ENCODE measurements at regions of chr6 and their contacts with region 1.

Region 1: DNA sequence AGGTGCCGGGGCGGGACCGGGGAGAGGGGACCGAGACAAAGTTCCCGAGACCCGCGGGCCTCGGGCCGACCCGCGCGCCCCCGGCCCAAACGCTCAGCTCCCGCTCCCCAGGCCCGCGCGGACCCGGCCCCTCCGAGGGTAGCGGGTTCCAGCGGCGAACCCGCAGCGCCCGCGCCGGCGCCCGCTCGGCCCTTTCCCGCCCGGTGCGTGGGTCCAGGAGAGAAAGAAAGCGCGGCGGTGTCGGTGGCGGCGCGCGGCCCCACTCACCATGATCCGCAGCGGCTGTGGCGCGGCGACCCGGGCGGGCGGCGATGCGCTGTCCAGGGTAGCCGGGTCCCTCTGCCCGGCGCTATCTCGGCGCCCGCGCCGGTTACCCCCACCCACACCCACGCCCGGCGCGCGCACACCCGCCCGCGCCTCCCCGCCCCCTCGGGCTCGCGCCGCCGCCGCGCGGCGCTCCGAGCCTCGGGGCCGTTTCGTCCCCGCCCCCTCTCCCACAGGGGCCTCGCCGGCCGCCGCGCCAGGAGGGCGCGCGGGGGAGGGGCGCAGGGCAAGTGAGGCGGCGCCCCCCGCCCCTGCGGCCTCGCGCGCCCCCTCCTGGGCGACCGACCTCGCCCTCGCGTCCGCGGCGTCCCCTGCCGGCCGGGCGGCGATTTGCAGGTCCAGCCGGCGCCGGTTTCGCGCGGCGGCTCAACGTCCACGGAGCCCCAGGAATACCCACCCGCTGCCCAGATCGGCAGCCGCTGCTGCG is at the start of gene ELOVL2:
- DNase-seq: peak; percentile 16 to 49
- ATAC-seq: peak; percentile 72 to 92 (median 83)
- H3K4me3 ChIP-seq: peak within 1 kb of the TSS; percentile 28 to 64 (median 55)
- H3K27ac ChIP-seq: peak within 1 kb of the TSS in 4 of 10 donors; percentile 27 to 60 (median 46)
- H3K4me1 ChIP-seq: peaks cover 0 to 11% (median 0%) of the 10 kb centered on the region in 9 donors
- H3K27me3 ChIP-seq: peaks cover 0 to 96% (median 78%) of the 10 kb centered on the region in 7 donors
- CTCF ChIP-seq: peak; percentile 27 to 65 (median 42)
- total RNA-seq, gene ELOVL2: 0.73 to 3.5 (median 1.0) TPM

Region 2: DNA sequence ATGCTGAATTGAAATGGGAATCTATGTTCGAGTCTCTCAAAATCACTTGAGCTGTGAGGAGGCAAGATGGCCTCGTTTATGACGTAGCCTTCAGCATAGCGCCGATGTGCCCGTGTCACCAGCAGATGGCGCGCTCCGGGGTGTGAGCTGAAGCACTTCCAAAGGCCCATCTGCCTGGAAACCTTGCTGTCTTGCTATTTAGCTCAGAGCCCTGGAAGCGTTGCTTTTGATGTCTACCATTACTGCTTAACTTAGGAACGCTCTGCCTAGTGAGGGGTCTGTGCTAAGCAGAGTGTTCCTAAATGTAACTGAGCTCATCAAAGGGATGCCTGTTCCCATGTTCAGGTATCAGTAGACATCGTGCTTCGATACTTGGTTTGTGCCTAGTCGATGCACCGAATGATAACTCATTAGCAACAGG is 89.5 kb before region 1 on chr6:
- intact Hi-C with region 1: loop called in 1 of 10 experiments (anchors 5 kb)
- DNase-seq: peak; percentile 73 to 78
- ATAC-seq: peak in 7 of 8 donors; percentile 51 to 85 (median 67)
- H3K4me3 ChIP-seq: no peak overlapping the region
- H3K27ac ChIP-seq: no peak overlapping the region
- H3K4me1 ChIP-seq: no peaks in the 10 kb centered on the region
- H3K27me3 ChIP-seq: peaks cover 0 to 7% (median 0%) of the 10 kb centered on the region in 7 donors
- CTCF ChIP-seq: peak; percentile 41 to 84 (median 70)

Region 3: DNA sequence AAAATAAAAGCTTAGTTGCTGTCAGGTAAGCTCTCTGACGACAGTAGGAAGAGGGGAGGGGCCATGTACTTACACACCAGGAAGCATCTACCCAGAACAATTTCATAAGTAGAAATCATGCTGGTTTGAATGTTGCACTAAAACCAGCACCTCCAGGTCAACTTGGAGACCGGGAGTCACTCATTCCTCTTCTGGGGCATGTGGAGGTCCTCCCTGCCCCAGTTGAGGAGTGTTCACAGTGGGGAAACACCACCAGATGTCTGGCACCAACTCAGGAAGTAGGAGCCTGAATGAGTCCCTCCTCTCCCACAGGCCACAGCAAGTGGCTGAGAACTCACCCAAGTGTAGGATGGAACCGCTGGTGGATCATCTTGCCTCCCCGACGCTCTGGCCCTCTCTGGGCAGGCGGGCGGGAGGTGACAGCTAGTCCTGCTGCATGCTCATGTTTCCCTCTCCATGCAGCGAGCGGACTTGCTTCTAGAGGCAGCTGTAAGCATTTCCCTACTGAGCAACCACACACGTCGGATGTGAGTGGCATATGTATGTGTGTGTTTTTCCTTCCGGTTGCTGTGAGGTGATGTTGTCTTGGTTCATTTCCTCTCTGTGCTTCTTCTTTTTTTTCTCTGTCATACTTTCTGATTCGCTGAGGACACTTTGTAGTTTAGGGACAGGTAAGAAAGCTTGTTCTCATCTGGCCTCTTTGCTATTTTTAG is 337.8 kb after region 1 on chr6:
- intact Hi-C with region 1: no loop called
- DNase-seq: peak in 1 of 2 donors; percentile 20
- ATAC-seq: peak in 7 of 8 donors; percentile 49 to 76 (median 67)
- H3K4me3 ChIP-seq: peak overlapping the region in 3 of 10 donors; percentile 21 to 60 (median 30)
- H3K27ac ChIP-seq: peak overlapping the region in 4 of 10 donors; percentile 1 to 92 (median 40)
- H3K4me1 ChIP-seq: peaks cover 0 to 27% (median 0%) of the 10 kb centered on the region in 9 donors
- H3K27me3 ChIP-seq: no peaks in the 10 kb centered on the region
- CTCF ChIP-seq: no peak